ENCODE measurements at regions of chr14 and their contacts with region 1.

Region 1: DNA sequence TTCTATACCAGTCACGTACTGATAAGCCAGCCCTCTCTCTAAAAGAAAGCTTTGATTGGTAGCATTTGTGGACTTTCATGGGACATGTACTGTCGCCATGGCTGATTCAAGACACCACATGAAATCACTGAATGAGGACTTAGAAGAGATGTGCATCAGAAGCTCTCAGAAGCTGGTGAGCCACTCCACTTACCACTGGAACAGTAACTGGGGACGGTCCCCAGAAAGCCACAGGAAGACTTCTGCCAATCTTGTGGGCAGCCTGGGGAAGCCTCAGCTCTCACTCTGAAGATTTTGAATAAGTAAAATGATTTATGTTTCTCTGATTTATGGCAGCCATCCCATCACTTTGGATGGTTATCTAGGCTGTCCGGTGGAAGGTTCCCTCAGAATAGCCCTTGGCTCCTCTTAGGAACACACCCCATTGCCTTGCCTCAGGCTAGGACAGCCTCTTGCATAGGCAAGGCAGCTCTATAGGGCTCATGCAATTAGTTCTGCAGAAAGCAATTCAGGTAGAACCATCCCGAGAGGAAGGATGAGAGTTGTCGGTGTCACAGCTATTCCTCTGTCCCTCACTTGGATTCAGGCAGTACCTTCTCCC is 9.8 kb downstream of the DHRS1 start:
- DNase-seq: peak; percentile 67
- ATAC-seq: peak; percentile 97
- H3K4me3 Mint-ChIP-seq: peak overlapping the region; percentile 41
- H3K27ac Mint-ChIP-seq: no peak overlapping the region
- H3K4me1 Mint-ChIP-seq: peaks cover 32% of the 10 kb centered on the region
- H3K27me3 Mint-ChIP-seq: peaks cover 18% of the 10 kb centered on the region

Region 2: DNA sequence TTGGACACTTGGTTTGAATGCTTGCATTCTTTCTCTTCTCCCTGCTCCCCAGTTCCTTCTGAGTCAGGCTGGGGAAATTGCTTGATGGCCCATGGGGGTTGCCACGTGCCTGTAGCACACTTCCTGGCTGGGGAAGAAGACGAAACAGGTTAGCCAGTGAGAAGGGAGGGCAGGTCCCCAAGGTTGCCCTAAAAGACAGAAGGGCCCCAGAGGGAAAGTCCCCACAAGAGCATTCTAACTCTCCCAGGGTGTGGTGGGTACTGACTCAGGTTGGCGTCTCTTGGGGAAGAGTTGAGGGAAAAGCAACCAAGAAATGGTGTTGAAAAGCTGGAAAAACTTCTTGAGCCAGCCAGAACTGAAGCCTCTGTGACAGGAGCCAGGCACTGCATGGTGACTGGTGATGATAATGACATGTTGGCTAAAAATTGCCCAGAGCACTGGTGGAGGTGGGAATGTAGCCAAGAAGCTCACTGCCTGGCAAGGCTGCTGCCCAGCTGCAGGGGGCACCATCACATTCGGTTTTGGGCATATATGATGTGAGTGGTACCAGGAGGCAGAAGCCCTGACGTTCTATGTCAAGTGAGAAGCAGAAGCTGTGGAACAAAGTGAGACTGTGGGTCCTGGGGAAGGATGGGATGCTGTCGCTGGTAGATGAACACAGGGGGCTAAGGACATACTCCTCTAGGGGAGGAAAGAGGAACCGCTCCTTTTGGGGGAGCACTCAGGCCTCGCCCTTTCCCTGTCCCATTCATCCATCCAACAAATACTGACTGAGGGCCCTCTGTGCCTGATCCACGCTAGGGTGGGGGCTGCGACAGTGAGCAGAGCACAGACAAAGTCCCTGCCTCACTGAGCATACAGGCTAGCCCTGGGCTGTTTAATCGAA is 10.2 kb before region 1 on chr14:
- POLR2A ChIA-PET with region 1: interaction called, 19 read pairs
- DNase-seq: no peak
- ATAC-seq: peak; percentile 71
- H3K4me3 Mint-ChIP-seq: no peak overlapping the region
- H3K27ac Mint-ChIP-seq: peak overlapping the region; percentile 28
- H3K4me1 Mint-ChIP-seq: peaks cover 23% of the 10 kb centered on the region
- H3K27me3 Mint-ChIP-seq: peaks cover 7% of the 10 kb centered on the region

Measured in activated naive CD8-positive, alpha-beta T cell treated with anti-CD3 and anti-CD28 coated beads, Interleukin-2, amount 10 ng/mL, durations not matched to agents 7 days and 5 days (primary cell).